ENCODE measurements at regions of chr3 and their contacts with region 1.

Region 1: DNA sequence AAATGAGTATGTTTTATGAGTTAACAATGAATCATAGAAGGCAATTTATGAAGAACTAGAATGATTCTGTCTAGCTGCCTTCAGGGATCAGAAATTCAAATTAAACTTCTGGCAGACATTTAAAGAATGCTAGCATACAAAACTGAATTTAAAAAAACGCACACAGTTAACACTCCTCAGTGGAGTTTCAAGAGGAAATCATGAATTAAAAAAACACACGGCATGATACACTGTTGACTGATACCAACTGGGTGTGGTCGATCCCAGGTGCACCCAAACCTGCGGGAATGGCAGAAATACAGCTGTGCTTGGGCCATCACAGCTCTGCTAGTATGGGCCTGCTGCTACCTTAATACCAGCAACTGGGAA is 526.0 kb downstream of the FOXP1 start:
- DNase-seq: no peak
- H3K4me3 ChIP-seq: no peak overlapping the region; the same call in 1 of the 2 replicates
- H3K27ac ChIP-seq: no peak overlapping the region
- H3K27me3 ChIP-seq: no peaks in the 10 kb centered on the region
- CTCF ChIP-seq: no peak

Region 2: GRCh38 chr3:70963431-70964275 is 93.9 kb before region 1 on chr3:
- CTCF ChIA-PET with region 1: interaction called, 10 read pairs
- POLR2A ChIA-PET with region 1: no interaction called
- DNase-seq: no peak
- H3K4me3 ChIP-seq: no peak overlapping the region
- H3K27ac ChIP-seq: no peak overlapping the region
- H3K27me3 ChIP-seq: no peaks in the 10 kb centered on the region
- CTCF ChIP-seq: no peak

Region 3: GRCh38 chr3:71028184-71028583 is 29.3 kb before region 1 on chr3:
- CTCF ChIA-PET with region 1: no interaction called
- POLR2A ChIA-PET with region 1: no interaction called
- DNase-seq: no peak
- H3K4me3 ChIP-seq: no peak overlapping the region
- H3K27ac ChIP-seq: no peak overlapping the region
- H3K27me3 ChIP-seq: no peaks in the 10 kb centered on the region
- CTCF ChIP-seq: no peak

Measured in AG04450 (cell line).